ENCODE measurements at regions of chr4 and their contacts with region 1.

Region 1: DNA sequence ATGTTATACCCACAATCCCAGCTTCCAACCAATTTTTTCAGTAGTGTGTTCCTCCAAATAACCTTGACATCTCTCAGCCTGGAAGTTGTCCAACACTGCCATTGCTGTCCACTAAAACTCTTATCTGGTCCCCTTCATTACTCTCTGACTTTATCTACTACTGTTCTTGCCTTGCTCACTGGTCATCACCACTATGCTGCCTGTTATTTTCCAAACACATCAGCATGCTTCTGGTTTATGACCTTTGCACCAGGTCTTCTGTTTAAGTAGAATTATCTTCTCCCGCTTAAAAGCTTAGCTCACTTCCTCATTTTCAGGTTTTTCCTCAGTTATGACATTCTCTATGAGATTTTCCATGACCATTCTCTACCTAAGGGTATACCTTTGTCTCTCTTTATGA is 5.5 kb downstream of the ELMOD2 start:
- DNase-seq: peak; percentile 83
- ATAC-seq: peak; percentile 89
- H3K4me3 ChIP-seq: peak overlapping the region in 1 of 3 experiments; percentile 8; a peak in 2 of 6 replicates
- H3K27ac ChIP-seq: peak overlapping the region; percentile 61
- H3K4me1 ChIP-seq: peaks cover 29% of the 10 kb centered on the region
- H3K27me3 ChIP-seq: no peaks in the 10 kb centered on the region; a peak in 1 of 5 replicates
- CTCF ChIP-seq: no peak
- EP300 ChIP-seq: peak in 1 of 2 experiments; percentile 24; a peak in 1 of 4 replicates
- POLR2A ChIP-seq: peak in 1 of 2 experiments; percentile 32; a peak in 1 of 4 replicates
- RAD21 ChIP-seq: no peak

Region 2: DNA sequence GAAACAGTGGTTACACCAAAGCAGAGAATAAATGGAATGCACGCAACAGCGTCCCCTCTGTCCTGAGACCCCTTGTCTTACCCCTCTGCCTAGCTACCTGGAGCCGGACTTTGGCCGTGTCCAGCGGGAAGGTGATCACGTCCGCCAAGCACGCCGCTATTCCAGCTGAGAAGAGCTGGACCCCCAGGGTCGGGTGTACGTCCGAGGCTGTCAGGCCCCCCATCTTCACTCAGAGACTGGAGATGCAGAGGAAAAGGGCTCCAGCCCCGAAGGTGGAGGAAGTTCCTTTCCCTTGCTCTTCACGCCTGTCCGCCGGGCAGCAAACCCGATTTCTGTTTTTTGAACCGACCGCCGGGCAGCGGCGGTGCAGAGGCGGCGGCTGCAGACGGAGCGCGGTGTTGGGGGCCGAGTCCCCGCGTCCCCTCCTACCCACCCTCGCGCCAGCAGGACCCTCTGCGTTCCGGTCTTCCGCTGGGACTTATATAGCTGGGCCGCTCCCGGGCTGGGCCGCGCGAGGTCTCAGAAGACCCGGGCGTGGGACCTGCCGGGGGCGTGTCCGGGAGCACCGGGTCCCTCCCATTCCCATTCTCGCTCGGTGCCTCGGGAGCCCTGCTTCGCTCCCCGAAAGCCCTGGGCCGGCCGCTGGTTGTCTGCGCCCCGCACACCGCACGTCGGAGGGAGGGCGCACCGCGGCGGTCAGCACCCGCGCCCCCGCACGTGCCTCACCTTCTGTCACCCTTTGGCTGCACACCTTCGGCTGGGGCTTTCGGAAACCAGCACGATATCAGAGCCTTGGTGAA is 39.3 kb after region 1 on chr4 and contains the start of gene UCP1:
- CTCF ChIA-PET with region 1: no interaction called
- POLR2A ChIA-PET with region 1: no interaction called
- in situ Hi-C with region 1: no loop called
- intact Hi-C with region 1: loop called (anchors 5 kb)
- DNase-seq: peak; percentile 4
- ATAC-seq: peak; percentile 87
- H3K4me3 ChIP-seq: peak within 1 kb of the TSS; percentile 60 to 79 (median 71)
- H3K27ac ChIP-seq: no peak within 1 kb of the TSS
- H3K4me1 ChIP-seq: peaks cover 27% of the 10 kb centered on the region
- H3K27me3 ChIP-seq: peaks cover 6 to 48% of the 10 kb centered on the region in 2 experiments
- CTCF ChIP-seq: 0 out of 2 replicates have a peak, but pooled peaks have one; percentile 14
- EP300 ChIP-seq: no peak
- POLR2A ChIP-seq: no peak
- RAD21 ChIP-seq: no peak
- total RNA-seq, gene UCP1: 0.11 TPM in 1 of 2 replicates, not detected in the other

Measured in HepG2 (cell line).